BJ (cell line): ENCODE measurements at regions of chr7 and their contacts with region 1.

Region 1: GRCh38 chr7:93231799-93232672 is at the start of gene VPS50:
- DNase-seq: peak; percentile 88
- H3K4me3 ChIP-seq: peak within 1 kb of the TSS; percentile 89
- H3K27me3 ChIP-seq: 0 out of 2 replicates have a peak, but pooled peaks cover 1% of the 10 kb centered on the region
- CTCF ChIP-seq: no peak
- polyA plus RNA-seq, gene VPS50: 10.9 and 17.6 TPM in 2 replicates

Region 2: GRCh38 chr7:93092757-93093370 is 139.2 kb before region 1 on chr7:
- CTCF ChIA-PET with region 1: interaction called, 22 read pairs
- POLR2A ChIA-PET with region 1: no interaction called
- DNase-seq: no peak
- H3K4me3 ChIP-seq: no peak overlapping the region
- H3K27me3 ChIP-seq: no peaks in the 10 kb centered on the region; the same call in 1 of the 2 replicates
- CTCF ChIP-seq: peak; percentile 63

Region 3: DNA sequence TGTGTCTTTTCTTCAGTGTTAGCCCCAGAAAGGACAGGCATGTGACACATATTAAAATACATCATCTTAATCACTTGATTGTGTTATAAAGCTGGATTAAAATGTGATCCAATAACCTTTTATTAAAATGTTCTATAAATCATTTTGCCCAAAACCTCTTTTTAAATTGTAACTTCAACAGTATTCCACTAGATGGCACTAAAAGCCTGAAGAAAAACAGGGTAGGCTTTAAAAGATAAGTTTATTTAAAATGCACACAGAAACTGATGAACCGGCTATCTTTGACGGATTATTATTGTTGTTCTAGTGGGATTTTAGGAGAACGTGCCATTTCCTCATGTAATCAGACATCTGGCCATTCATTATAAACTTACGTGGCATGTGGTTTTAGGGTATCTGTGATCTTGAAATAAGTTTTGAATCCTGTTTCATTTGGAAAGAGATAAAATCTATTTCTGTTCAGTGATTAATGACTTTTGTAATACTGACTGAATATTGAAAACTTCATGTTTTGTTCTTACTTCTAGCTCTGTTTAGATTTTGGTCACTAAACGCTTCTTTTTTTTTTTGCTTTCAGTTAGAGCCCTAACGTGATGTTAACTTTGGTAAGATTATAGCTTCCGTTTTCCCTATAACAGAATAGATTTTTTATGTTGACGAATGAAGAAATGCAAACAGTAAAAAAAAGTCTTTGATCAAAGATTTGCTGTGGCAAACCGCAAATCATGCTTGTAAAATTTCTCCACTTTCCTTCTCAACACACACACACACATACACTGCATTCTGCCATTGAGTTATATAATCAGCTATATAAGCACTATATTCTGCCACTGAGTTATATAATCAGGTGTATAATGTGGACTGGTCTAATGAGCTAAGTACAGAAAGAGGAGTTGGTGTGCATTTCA is 13.7 kb after region 1 on chr7:
- CTCF ChIA-PET with region 1: interaction called, 15 read pairs
- POLR2A ChIA-PET with region 1: no interaction called
- DNase-seq: no peak
- H3K4me3 ChIP-seq: no peak overlapping the region
- H3K27me3 ChIP-seq: no peaks in the 10 kb centered on the region
- CTCF ChIP-seq: peak; percentile 35; the same call in 1 of the 2 replicates

Region 4: GRCh38 chr7:93315896-93316295 is 83.9 kb after region 1 on chr7:
- CTCF ChIA-PET with region 1: no interaction called
- POLR2A ChIA-PET with region 1: interaction called, 11 read pairs
- DNase-seq: no peak
- H3K4me3 ChIP-seq: no peak overlapping the region
- H3K27me3 ChIP-seq: no peaks in the 10 kb centered on the region
- CTCF ChIP-seq: no peak